Calu3 (cell line): ENCODE measurements at regions of chr11 and their contacts with region 1.

Region 1: GRCh38 chr11:1652771-1653540 is 23.4 kb downstream of the KRTAP5-5 start:
- DNase-seq: peak; percentile 83
- H3K4me3 Mint-ChIP-seq: no peak overlapping the region
- H3K27ac Mint-ChIP-seq: no peak overlapping the region
- H3K4me1 Mint-ChIP-seq: no peaks in the 10 kb centered on the region
- H3K27me3 Mint-ChIP-seq: peaks cover 75% of the 10 kb centered on the region
- CTCF ChIP-seq: peak; percentile 98

Region 2: GRCh38 chr11:1422481-1422880 is 230.5 kb before region 1 on chr11:
- CTCF ChIA-PET with region 1: no interaction called
- intact Hi-C with region 1: no loop called
- DNase-seq: no peak
- H3K4me3 Mint-ChIP-seq: no peak overlapping the region
- H3K27ac Mint-ChIP-seq: no peak overlapping the region
- H3K4me1 Mint-ChIP-seq: no peaks in the 10 kb centered on the region
- H3K27me3 Mint-ChIP-seq: peaks cover 21% of the 10 kb centered on the region
- CTCF ChIP-seq: no peak

Region 3: DNA sequence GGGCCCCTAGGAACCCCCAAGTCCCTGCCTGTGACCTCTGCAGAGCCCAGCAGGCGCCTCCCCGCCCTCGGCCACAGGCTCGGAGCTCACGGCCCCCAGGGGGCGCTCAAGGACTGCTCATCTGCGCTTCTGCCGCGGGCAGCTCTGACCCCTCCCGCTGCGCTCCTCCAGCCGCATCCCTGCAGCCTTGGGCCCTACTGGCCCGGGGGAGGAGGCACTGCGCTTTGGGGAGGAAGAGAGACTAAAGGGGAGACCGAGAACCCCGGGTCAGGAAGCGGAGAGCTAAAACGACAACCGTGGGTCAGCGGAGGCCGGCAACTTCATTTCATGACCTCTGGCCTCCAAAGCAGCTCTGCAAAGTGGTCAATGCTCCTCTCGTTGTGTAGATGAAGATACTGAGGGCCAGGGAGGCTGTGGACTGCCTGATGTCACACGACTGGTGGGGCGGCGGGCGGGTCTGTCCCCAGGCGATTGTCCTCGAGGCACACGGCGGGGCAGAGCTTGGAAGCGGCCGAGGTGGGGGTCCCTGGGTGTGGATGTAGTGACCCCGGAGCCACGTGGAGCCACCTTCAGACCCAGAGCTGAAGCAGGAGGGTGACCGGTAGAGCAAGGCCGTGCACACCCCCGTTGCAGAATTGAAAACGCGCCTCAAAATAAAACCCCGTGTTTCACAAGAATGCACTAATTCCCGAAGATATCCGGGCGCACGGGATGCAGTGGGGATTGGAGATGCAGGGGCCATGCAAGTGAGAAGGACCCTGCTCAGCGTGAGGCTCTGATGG is 41.3 kb after region 1 on chr11:
- CTCF ChIA-PET with region 1: interaction called, 19 read pairs
- intact Hi-C with region 1: no loop called
- DNase-seq: peak; percentile 94
- H3K4me3 Mint-ChIP-seq: peak overlapping the region; percentile 68
- H3K27ac Mint-ChIP-seq: no peak overlapping the region
- H3K4me1 Mint-ChIP-seq: peaks cover 16% of the 10 kb centered on the region
- H3K27me3 Mint-ChIP-seq: peaks cover 36% of the 10 kb centered on the region
- CTCF ChIP-seq: peak; percentile 92